Mammary epithelial cell (primary cell): ENCODE measurements at regions of chr6 and their contacts with region 1.

Region 1: DNA sequence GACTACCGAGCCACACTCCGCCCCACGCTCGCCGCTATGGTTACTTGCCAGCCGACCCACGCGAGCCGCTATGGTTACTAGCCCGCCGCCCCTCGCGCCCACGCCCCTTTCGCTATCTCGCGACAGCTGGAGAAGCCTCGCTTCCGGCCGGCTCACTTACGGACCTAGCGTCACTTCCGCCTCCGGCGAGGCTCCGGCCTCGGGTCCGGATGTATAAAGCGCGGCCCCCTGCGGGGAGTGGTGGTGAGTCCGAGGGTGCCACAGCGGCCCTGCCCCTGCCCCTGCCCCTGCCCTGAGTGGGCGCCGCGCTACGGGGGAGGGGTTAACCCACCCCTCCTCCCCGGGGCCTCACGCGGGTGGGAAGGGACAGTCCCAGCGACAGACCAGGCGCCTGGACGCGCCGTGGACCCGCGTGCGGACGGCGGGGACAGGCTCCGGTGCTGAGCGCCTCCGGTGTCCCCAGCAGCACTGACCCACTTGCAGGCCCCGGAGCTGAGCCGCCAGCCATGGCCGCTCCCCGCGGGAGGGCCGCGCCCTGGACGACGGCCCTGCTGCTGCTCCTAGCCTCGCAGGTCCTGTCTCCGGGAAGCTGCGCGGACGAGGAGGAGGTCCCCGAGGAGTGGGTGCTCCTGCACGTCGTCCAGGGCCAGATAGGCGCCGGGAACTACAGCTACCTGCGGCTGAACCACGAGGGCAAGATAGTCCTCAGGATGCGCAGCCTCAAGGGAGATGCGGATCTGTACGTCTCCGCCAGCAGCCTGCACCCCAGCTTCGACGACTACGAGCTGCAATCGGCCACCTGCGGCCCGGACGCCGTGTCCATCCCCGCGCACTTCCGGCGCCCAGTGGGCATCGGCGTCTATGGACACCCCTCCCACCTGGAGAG is at the starts of genes C6orf120 and WDR27:
- DNase-seq: peak; percentile 95
- H3K4me3 ChIP-seq: peak within 1 kb of the TSS; percentile 77 to 95 (median 80)
- H3K27ac ChIP-seq: peak within 1 kb of the TSS; percentile 80
- H3K4me1 ChIP-seq: peaks cover 33% of the 10 kb centered on the region
- H3K27me3 ChIP-seq: no peaks in the 10 kb centered on the region
- CTCF ChIP-seq: no peak
- total RNA-seq, gene C6orf120: 22.0 to 26.0 TPM
- total RNA-seq, gene WDR27: 21.7 to 50.2 TPM

Region 2: DNA sequence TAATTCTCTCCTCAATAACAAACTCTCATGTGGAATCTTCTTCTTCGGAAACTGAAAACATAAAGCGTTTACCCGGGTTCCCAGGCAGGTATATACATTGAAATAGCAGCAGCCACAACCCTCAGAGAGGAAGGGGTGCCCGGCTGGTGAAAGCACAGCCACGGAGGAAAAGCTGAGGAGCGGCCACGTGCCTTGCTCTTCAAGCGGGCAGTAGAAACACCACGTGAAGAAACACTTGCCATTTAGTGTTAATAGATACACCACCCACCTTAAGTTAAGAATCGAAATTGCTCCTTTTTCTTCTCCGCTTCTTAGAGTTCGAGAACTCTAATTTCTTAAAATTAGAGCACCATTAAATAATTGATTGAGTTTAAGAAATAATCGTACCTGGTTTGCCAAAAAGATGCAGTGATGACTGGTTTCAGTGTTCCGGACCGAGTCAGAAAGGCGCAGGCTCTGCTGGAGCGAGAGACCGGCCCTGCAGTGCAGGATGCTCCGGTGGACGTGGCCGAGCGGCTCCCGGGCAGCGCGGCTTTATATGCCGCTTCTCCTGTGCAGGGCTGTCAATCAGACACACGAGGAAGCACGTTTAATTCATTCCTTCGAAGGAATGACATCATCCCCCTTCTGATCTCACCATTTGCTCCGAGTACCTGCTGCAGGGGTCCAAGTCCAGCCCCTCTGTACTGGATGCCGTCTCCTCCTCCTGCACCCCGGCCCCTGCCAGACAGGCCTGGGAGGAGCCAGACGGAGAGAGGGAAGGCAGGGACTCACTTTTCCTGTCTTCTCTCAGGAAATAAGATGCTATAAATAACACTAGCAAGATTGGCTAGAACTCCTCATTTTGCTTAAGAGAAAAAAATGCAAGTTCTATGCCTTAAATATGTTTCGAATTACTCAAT is 448.6 kb before region 1 on chr6 and contains the start of gene THBS2:
- CTCF ChIA-PET with region 1: no interaction called
- dilution Hi-C with region 1: no loop called
- in situ Hi-C with region 1: no loop called
- intact Hi-C with region 1: loop called (anchors 10 kb)
- DNase-seq: no peak
- H3K4me3 ChIP-seq: no peak within 1 kb of the TSS
- H3K27ac ChIP-seq: no peak within 1 kb of the TSS
- H3K4me1 ChIP-seq: peaks cover 9% of the 10 kb centered on the region
- H3K27me3 ChIP-seq: no peaks in the 10 kb centered on the region
- CTCF ChIP-seq: no peak
- total RNA-seq, gene THBS2: 0.64 to 4.3 TPM

Region 3: GRCh38 chr6:169340395-169340794 is 361.8 kb before region 1 on chr6:
- CTCF ChIA-PET with region 1: no interaction called
- dilution Hi-C with region 1: no loop called
- in situ Hi-C with region 1: no loop called
- intact Hi-C with region 1: loop called (anchors 2 kb)
- DNase-seq: peak; percentile 79
- H3K4me3 ChIP-seq: no peak overlapping the region
- H3K27ac ChIP-seq: peak overlapping the region; percentile 66
- H3K4me1 ChIP-seq: peaks cover 58% of the 10 kb centered on the region
- H3K27me3 ChIP-seq: no peaks in the 10 kb centered on the region
- CTCF ChIP-seq: no peak

Region 4: DNA sequence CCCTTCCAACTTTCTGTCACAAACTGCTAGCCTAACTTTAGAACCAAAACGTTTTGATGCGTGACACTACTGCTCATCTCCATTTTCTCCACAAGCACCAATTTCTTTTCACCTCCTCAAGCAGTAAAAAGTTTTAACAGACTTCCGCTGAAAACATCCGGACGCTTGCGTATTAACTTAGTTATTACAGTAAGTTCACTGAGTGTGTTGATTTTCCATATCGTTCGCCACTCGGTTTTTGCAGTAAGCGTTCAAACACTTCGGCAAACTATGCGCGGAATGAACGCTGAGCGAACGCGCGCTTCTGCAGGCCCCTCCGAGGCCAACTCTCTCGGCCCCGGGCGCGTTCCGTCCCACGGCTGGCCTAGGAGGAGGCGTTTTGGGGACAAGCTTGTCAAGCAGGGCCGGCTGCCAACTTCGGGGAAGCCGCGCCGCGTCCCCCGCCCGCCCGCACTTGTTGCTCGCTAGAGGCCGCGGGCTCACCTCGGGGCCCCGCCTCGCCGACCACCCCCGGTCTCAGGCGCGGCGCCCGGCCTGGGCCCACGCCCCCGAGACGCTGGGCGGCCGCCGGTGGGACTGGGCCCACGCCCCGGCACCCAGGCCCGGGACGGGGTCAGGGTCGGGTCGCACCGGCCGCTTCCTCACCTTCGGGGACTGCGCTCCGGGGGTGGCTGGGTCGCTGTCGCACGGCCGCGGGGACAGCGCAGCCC is 21.2 kb after region 1 on chr6:
- CTCF ChIA-PET with region 1: no interaction called
- dilution Hi-C with region 1: no loop called
- in situ Hi-C with region 1: no loop called
- intact Hi-C with region 1: loop called (anchors 1 kb)
- DNase-seq: peak; percentile 47
- H3K4me3 ChIP-seq: peak overlapping the region; percentile 47 to 74 (median 67)
- H3K27ac ChIP-seq: peak overlapping the region; percentile 69
- H3K4me1 ChIP-seq: peaks cover 17% of the 10 kb centered on the region
- H3K27me3 ChIP-seq: no peaks in the 10 kb centered on the region
- CTCF ChIP-seq: no peak

Region 5: GRCh38 chr6:169751242-169752073 is 49.3 kb after region 1 on chr6 and contains the starts of genes DYNLT2 and ERMARD:
- CTCF ChIA-PET with region 1: no interaction called
- dilution Hi-C with region 1: no loop called
- in situ Hi-C with region 1: no loop called
- intact Hi-C with region 1: loop called (anchors 2 kb)
- DNase-seq: peak; percentile 95
- H3K4me3 ChIP-seq: peak within 1 kb of the TSS; percentile 90 to 100 (median 96)
- H3K27ac ChIP-seq: peak within 1 kb of the TSS; percentile 84
- H3K4me1 ChIP-seq: peaks cover 16% of the 10 kb centered on the region
- H3K27me3 ChIP-seq: no peaks in the 10 kb centered on the region
- CTCF ChIP-seq: peak in 1 of 2 donors; percentile 32
- total RNA-seq, gene DYNLT2: 0.67 to 0.80 TPM
- total RNA-seq, gene ERMARD: 19.2 to 32.4 TPM